Mammary epithelial cell (primary cell): ENCODE measurements at regions of chr4 and their contacts with region 1.

Region 1: DNA sequence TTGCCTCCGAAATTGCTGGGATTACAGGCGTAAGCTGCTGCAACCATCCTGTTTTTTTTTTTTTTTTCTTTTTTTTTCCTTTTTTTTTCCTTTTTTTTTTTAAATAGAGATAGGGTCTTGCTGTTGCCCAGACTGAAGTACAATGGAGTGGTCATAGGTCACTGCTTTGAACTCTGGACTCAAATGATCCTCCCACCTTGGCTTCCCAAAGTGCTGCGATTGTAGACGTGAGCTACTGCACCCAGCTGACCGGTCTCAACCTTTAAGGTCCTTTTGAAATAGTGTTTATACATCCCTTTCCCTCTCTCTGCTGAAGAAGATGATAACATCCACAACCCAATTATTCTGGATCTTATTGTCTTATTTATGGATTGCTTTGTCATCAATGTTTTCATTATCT is 548.7 kb downstream of the GBA3 start:
- DNase-seq: no peak
- H3K4me3 ChIP-seq: no peak overlapping the region
- H3K27ac ChIP-seq: no peak overlapping the region
- H3K4me1 ChIP-seq: no peaks in the 10 kb centered on the region
- H3K27me3 ChIP-seq: no peaks in the 10 kb centered on the region
- CTCF ChIP-seq: no peak

Region 2: DNA sequence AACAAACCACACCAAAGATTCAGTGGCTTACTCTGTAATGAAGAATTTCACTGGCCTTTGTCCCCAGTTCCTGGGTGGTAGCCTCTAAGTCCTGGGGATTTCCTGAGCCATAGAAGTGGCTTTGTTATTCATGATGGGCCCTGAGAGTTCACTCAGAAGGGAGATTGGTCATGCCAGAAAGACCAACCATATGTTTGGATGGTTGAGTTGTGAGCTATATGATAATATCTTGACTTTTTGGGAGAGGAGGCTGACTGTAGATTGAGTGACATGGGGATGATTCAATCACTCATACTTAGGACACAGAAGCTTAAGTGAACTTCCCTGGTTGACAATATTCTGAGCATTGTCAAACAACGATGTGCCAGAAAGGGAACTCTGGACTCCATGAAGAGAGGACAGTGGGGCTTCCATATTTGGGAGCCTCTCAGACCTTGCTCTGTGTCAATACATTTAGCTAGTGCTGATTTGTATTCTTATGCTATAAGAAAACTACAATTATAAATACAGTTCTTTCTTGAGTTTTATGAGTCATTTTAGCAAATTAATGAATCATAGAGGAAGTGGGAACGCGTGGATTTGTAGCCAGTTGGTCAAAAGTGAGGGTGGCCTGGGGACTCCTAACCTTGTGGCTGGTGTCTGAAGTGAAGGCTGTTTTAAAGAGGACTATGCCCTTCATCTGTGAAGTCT is 156.7 kb before region 1 on chr4:
- CTCF ChIA-PET with region 1: no interaction called
- dilution Hi-C with region 1: no loop called
- in situ Hi-C with region 1: no loop called
- intact Hi-C with region 1: no loop called
- DNase-seq: no peak
- H3K4me3 ChIP-seq: no peak overlapping the region
- H3K27ac ChIP-seq: no peak overlapping the region
- H3K4me1 ChIP-seq: no peaks in the 10 kb centered on the region
- H3K27me3 ChIP-seq: no peaks in the 10 kb centered on the region
- CTCF ChIP-seq: no peak

Region 3: GRCh38 chr4:23135792-23136645 is 105.4 kb before region 1 on chr4:
- CTCF ChIA-PET with region 1: interaction called, 13 read pairs
- dilution Hi-C with region 1: no loop called
- in situ Hi-C with region 1: no loop called
- intact Hi-C with region 1: no loop called
- DNase-seq: peak; percentile 8
- H3K4me3 ChIP-seq: no peak overlapping the region
- H3K27ac ChIP-seq: no peak overlapping the region
- H3K4me1 ChIP-seq: no peaks in the 10 kb centered on the region
- H3K27me3 ChIP-seq: no peaks in the 10 kb centered on the region
- CTCF ChIP-seq: peak; percentile 74 to 78

Region 4: DNA sequence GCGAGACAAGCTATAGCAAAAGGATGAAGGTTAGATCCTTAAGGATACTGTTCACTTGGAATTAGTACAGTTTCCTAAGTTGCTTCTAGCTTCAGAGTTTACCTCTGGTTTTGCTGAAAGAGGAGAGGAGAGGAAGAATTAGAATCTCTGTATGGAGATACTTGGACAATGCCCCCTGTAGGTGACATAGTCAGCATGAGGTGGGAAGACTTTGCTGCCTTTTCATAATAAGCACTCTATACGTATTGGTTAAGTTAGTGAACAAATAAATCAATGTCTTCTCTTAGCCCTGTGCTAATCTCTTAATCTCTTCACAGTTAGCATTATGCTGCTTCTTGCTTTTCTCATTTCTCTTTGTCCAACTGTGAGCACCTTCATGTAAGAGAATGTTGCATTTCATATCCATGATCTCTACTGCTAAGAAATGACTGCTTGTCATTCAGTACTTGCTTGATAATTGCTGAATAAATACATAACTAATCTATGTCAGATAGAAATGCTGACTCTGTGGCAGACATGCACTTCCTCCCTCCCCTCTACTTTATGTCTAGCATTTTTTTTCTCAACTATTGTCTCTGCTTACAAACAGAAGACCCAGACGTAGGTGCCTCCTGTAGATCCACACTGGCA is 21.5 kb before region 1 on chr4:
- CTCF ChIA-PET with region 1: no interaction called
- dilution Hi-C with region 1: no loop called
- in situ Hi-C with region 1: no loop called
- intact Hi-C with region 1: no loop called
- DNase-seq: no peak
- H3K4me3 ChIP-seq: no peak overlapping the region
- H3K27ac ChIP-seq: no peak overlapping the region
- H3K4me1 ChIP-seq: no peaks in the 10 kb centered on the region
- H3K27me3 ChIP-seq: no peaks in the 10 kb centered on the region
- CTCF ChIP-seq: no peak

Region 5: GRCh38 chr4:23324021-23324690 is 82.7 kb after region 1 on chr4:
- CTCF ChIA-PET with region 1: no interaction called
- dilution Hi-C with region 1: no loop called
- in situ Hi-C with region 1: no loop called
- intact Hi-C with region 1: no loop called
- DNase-seq: peak; percentile 41
- H3K4me3 ChIP-seq: no peak overlapping the region
- H3K27ac ChIP-seq: no peak overlapping the region
- H3K4me1 ChIP-seq: peaks cover 14% of the 10 kb centered on the region
- H3K27me3 ChIP-seq: no peaks in the 10 kb centered on the region
- CTCF ChIP-seq: no peak